ENCODE measurements at regions of chr9 and their contacts with region 1.

Region 1: DNA sequence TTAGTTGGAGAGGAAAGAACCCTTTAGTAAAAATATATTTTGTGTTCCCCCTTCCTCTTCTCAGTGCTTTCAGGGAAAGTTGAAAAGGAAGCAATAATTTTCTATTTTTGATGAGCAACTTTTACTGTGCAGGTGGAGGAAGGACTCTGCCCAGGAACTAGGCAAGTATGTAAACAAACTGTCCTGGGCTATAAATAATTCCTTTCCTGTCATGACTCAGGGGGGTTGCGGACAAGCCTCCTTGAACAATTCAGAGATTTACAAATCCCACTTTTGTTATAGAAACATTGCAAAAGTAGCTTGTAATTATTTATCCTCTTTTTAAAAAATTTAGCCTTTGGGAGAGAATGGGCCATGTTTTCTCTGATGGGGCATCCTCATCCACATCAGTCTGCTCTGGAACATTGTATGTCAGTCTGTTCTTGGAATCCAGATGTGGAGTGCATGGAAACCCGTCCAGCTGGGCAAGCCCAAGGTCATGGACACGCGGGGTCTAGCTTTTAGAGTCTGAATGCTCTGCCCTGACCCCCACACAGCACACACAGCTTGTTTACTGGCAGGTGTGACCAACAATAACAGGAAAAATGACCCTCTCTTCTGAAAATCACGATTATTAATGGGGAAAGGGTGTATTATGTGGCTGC is 127.6 kb downstream of the GADD45G start:
- DNase-seq: no peak
- ATAC-seq: peak; percentile 46 to 75 (median 73)
- H3K4me3 ChIP-seq: no peak overlapping the region
- H3K27ac ChIP-seq: peak overlapping the region in 6 of 12 donors; percentile 29 to 69 (median 50)
- H3K4me1 ChIP-seq: peaks cover 9 to 31% (median 20%) of the 10 kb centered on the region in 12 donors
- H3K27me3 ChIP-seq: no peaks in the 10 kb centered on the region
- CTCF ChIP-seq: no peak
- POLR2A ChIP-seq: no peak

Region 2: GRCh38 chr9:89623925-89624420 is 108.4 kb before region 1 on chr9:
- intact Hi-C with region 1: loop called in 1 of 10 experiments (anchors 10 kb)
- DNase-seq: peak; percentile 25 to 74 (median 46)
- ATAC-seq: peak; percentile 65 to 76 (median 68)
- H3K4me3 ChIP-seq: no peak overlapping the region
- H3K27ac ChIP-seq: peak overlapping the region; percentile 30 to 85 (median 72)
- H3K4me1 ChIP-seq: peaks cover 0 to 40% (median 20%) of the 10 kb centered on the region in 12 donors
- H3K27me3 ChIP-seq: no peaks in the 10 kb centered on the region
- CTCF ChIP-seq: peak in 3 of 12 donors; percentile 19 to 21 (median 19)
- POLR2A ChIP-seq: no peak

Region 3: DNA sequence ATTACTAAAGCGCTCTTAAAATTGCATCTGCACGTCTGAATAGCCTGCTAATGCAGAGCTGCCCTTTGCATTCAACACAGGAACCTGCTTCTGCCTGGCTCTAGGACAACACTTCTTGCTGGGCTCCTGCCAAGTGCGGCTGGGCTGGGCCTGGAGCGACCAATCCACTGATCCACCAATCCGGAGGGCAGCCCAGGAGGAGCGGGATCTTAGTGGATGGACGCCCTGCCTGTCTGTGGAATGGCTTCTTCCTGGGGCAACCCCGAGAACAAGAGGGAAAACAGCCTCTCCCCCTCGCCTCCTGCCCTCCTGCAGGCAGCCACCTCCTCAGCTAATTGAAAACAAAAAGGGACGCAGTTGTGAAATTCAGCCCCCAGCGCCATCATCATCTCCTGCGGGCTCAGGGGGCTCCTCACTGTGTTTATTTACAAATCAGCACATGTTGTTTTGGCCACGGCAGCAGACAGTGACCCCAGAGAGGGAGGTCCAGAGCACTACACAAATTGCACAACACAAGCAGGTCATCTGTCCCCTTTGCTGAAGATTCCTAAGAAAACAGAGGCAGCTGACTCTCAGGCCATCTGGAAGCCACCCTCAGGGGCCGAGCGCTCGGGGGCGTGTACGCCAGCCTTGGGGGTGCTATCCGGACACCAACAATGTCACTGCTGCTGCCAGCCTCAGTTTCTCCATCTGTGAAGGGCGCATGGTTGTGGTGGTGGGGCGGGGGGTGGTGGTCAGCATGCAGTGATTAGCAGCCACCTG is 70.3 kb before region 1 on chr9:
- intact Hi-C with region 1: no loop called
- DNase-seq: peak; percentile 98 to 99 (median 98)
- ATAC-seq: peak; percentile 95 to 98 (median 97)
- H3K4me3 ChIP-seq: peak overlapping the region in 10 of 12 donors; percentile 15 to 53 (median 44)
- H3K27ac ChIP-seq: peak overlapping the region; percentile 2 to 83 (median 77)
- H3K4me1 ChIP-seq: peaks cover 5 to 41% (median 18%) of the 10 kb centered on the region in 12 donors
- H3K27me3 ChIP-seq: no peaks in the 10 kb centered on the region
- CTCF ChIP-seq: no peak
- POLR2A ChIP-seq: no peak

Region 4: DNA sequence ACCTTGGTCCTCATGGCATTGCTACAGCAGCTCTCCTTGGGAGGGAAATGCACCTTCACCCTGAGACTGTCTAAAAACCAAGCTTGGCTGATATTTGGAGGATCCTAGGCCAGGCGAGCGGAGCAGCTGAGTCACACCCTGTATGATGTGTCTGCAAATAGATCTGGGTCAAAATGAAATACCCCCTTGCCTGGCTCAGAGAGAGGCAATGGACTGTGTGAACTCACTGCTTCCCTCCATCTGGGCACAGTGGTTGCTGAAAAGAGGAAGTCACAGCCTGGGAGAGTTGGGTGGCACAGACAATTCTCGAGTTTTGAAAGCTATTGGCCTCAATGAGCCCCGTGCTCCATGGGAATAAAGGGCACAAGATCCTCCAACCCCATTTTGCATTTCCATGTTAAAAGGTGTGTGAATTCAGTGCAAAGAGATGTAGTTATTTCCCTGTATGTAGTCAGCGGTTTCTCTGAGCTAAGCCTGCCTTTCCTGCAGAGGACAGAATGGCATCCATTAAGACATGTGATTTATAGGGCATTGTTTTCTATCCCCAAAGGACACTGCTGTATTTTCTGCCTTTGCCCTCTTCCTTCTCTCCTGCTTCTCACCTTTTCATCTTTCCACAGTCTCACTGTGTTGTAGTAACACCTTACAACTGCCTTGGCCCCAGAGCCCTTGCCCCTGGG is 49.6 kb after region 1 on chr9:
- intact Hi-C with region 1: no loop called
- DNase-seq: no peak
- ATAC-seq: peak in 3 of 4 donors; percentile 43 to 57 (median 52)
- H3K4me3 ChIP-seq: no peak overlapping the region
- H3K27ac ChIP-seq: no peak overlapping the region
- H3K4me1 ChIP-seq: peaks cover 0 to 29% (median 8%) of the 10 kb centered on the region in 12 donors
- H3K27me3 ChIP-seq: peaks cover 0 to 5% (median 0%) of the 10 kb centered on the region in 9 donors
- CTCF ChIP-seq: no peak
- POLR2A ChIP-seq: no peak

Region 5: DNA sequence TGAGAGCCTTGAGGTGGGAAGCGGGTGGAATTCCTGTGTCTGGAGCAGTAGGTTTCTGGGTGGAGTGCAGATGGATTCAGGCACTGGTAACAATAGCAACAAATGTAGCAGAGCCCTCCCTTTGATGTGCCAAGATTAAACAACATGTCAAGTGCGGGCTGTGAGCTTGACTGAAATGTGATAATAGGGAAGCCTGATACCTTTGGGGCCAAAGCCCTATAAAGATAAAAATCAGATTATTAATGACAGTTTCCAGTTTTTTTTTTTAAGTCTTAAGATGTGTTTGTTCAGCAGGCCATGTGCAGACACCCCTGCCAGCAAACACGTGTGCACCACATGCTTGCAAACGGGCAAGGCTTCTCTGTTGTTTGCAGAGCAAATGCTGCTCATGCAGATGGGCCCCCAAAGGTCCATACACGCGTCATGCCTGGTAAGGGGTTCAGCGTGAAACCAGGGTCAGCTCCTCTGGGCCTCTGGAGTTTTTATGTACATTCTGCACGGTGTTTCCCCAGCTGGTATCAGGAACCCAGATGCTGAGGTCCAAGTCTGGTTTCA is 65.6 kb after region 1 on chr9:
- intact Hi-C with region 1: loop called in 1 of 10 experiments (anchors 10 kb)
- DNase-seq: no peak
- ATAC-seq: no peak
- H3K4me3 ChIP-seq: no peak overlapping the region
- H3K27ac ChIP-seq: no peak overlapping the region
- H3K4me1 ChIP-seq: peaks cover 0 to 15% (median 6%) of the 10 kb centered on the region in 12 donors
- H3K27me3 ChIP-seq: no peaks in the 10 kb centered on the region
- CTCF ChIP-seq: no peak
- POLR2A ChIP-seq: no peak

Region 6: GRCh38 chr9:89929673-89930480 is 197.5 kb after region 1 on chr9:
- intact Hi-C with region 1: no loop called
- DNase-seq: peak in 3 of 5 donors; percentile 27 to 55 (median 49)
- ATAC-seq: peak; percentile 79 to 92 (median 81)
- H3K4me3 ChIP-seq: no peak overlapping the region
- H3K27ac ChIP-seq: peak overlapping the region in 1 of 12 donors; percentile 45
- H3K4me1 ChIP-seq: peaks cover 0 to 33% (median 16%) of the 10 kb centered on the region in 12 donors
- H3K27me3 ChIP-seq: no peaks in the 10 kb centered on the region
- CTCF ChIP-seq: no peak
- POLR2A ChIP-seq: no peak

Region 7: GRCh38 chr9:90365666-90366065 is 633.2 kb after region 1 on chr9:
- intact Hi-C with region 1: no loop called
- DNase-seq: no peak
- ATAC-seq: no peak
- H3K4me3 ChIP-seq: no peak overlapping the region
- H3K27ac ChIP-seq: no peak overlapping the region
- H3K4me1 ChIP-seq: no peaks in the 10 kb centered on the region
- H3K27me3 ChIP-seq: peaks cover 0 to 13% (median 0%) of the 10 kb centered on the region in 9 donors
- CTCF ChIP-seq: no peak
- POLR2A ChIP-seq: no peak